WTC11 (cell line): ENCODE measurements at regions of chr9 and their contacts with region 1.

Region 1: DNA sequence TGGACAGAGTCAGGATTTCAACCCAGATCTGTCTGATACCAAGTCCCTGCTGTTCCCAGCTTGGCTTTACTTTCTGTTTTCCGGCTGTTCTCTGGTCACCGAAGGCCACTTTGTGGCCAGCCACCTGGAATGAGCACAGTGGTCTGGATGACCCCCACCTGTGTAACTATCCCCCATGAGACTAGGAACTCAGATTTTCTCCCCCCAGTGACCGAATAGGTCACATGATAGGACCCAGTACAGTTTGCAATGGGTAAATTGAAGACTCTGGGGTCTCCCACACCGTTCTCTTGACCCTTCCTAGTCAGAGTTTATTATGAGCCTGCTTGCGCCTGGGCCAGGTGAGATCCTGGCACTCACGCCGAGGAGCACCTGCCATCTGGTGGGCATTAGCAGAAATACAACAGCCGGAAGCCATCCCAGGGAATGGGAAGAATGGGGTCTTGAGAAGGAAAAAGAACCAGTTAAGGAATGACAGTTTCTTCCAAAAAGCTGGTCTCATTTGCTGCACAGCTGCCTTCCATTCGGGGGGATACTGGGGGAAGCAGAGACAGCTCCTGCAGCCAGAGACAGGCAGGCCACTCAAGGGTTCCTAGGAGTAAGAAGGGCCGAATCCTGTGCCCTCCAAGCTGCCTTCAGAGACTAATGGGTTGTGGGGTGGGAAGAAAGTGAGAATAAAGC is 7.1 kb downstream of the PHYHD1 start:
- DNase-seq: peak; percentile 79
- ATAC-seq: peak; percentile 96
- H3K4me3 Mint-ChIP-seq: no peak overlapping the region
- H3K27ac Mint-ChIP-seq: peak overlapping the region; percentile 86
- H3K4me1 Mint-ChIP-seq: peaks cover 6% of the 10 kb centered on the region; the same call in 1 of the 2 replicates
- H3K27me3 Mint-ChIP-seq: no peaks in the 10 kb centered on the region
- CTCF ChIP-seq: peak; percentile 87

Region 2: DNA sequence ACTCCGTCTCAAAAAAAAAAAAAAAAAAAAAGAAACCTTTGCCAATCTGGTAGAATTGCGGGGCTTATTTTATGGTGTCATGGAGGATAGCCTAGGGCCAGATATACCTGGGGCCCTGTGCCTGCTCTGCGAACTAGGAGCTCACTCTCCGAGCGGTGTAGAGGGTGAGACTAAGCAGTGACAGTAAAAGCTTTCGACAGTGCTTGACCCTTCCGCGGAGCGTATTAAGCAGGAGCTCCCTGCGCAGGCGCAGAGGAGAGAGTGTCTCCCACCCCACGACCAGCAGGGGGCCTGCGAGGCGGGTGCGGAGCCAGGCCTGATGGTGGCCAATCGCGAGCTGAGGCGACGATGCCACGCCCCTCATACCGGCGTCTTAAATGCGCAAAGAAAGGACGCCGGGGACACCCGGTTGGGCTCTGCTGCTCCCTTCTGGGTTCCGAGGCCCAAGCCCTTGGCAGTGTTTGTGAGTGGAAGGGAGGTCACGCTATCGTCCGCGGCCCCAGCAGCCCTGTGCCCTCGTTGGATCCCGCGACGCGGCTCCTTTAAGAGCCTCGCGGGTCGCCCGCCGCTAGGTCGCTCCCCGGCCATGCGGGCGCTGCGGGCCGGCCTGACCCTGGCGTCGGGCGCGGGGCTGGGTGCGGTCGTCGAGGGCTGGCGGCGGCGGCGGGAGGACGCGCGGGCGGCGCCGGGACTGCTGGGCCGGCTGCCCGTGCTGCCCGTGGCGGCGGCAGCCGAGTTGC is 109.6 kb before region 1 on chr9 and contains the start of gene ENDOG:
- CTCF ChIA-PET with region 1: interaction called, 12 read pairs
- POLR2A ChIA-PET with region 1: interaction called, 3 read pairs
- DNase-seq: peak; percentile 99
- ATAC-seq: peak; percentile 86
- H3K4me3 Mint-ChIP-seq: peak within 1 kb of the TSS; percentile 71
- H3K27ac Mint-ChIP-seq: peak within 1 kb of the TSS; percentile 80; the same call in 1 of the 2 replicates
- H3K4me1 Mint-ChIP-seq: peaks cover 3% of the 10 kb centered on the region
- H3K27me3 Mint-ChIP-seq: no peaks in the 10 kb centered on the region
- CTCF ChIP-seq: peak; percentile 53; the same call in 1 of the 2 replicates
- total RNA-seq, gene ENDOG: 25.8 to 28.7 TPM (median 25.8 TPM) in 3 replicates

Region 3: GRCh38 chr9:128846680-128847030 is 81.2 kb before region 1 on chr9:
- CTCF ChIA-PET with region 1: interaction called, 13 read pairs
- POLR2A ChIA-PET with region 1: interaction called, 4 read pairs
- DNase-seq: no peak
- ATAC-seq: no peak
- H3K4me3 Mint-ChIP-seq: no peak overlapping the region
- H3K27ac Mint-ChIP-seq: no peak overlapping the region
- H3K4me1 Mint-ChIP-seq: no peaks in the 10 kb centered on the region
- H3K27me3 Mint-ChIP-seq: no peaks in the 10 kb centered on the region
- CTCF ChIP-seq: no peak

Region 4: GRCh38 chr9:128863647-128864046 is 64.2 kb before region 1 on chr9:
- CTCF ChIA-PET with region 1: interaction called, 54 read pairs
- POLR2A ChIA-PET with region 1: interaction called, 3 read pairs
- DNase-seq: peak; percentile 95
- ATAC-seq: peak; percentile 99
- H3K4me3 Mint-ChIP-seq: no peak overlapping the region
- H3K27ac Mint-ChIP-seq: peak overlapping the region; percentile 53; the same call in 1 of the 2 replicates
- H3K4me1 Mint-ChIP-seq: peaks cover 19% of the 10 kb centered on the region; the same call in 1 of the 2 replicates
- H3K27me3 Mint-ChIP-seq: no peaks in the 10 kb centered on the region
- CTCF ChIP-seq: peak; percentile 100

Region 5: DNA sequence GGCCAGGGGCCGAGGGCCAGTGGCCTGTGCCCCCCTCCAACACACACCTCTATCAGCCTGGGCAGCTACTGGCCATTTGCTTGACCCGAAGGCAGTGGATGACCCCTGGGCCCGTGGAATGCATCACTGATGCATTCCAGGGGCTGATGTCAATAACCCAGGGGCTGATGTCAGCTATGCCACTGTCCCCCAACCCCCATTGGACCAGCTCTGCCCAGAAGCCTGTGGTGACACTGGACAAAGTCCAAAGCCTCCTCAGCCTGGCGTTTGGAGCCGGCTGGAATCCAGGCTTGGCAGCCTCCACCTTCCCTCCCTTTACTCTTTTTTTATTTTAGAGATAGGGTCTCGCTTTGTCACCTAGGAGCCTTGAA is 52.1 kb before region 1 on chr9:
- CTCF ChIA-PET with region 1: interaction called, 20 read pairs
- POLR2A ChIA-PET with region 1: interaction called, 6 read pairs
- DNase-seq: no peak
- ATAC-seq: no peak
- H3K4me3 Mint-ChIP-seq: no peak overlapping the region
- H3K27ac Mint-ChIP-seq: no peak overlapping the region
- H3K4me1 Mint-ChIP-seq: peaks cover 11% of the 10 kb centered on the region
- H3K27me3 Mint-ChIP-seq: no peaks in the 10 kb centered on the region
- CTCF ChIP-seq: no peak

Region 6: GRCh38 chr9:128895556-128895955 is 32.3 kb before region 1 on chr9:
- CTCF ChIA-PET with region 1: interaction called, 13 read pairs
- POLR2A ChIA-PET with region 1: no interaction called
- DNase-seq: peak; percentile 63
- ATAC-seq: peak; percentile 87
- H3K4me3 Mint-ChIP-seq: no peak overlapping the region
- H3K27ac Mint-ChIP-seq: peak overlapping the region; percentile 17; the same call in 1 of the 2 replicates
- H3K4me1 Mint-ChIP-seq: peaks cover 38% of the 10 kb centered on the region
- H3K27me3 Mint-ChIP-seq: no peaks in the 10 kb centered on the region
- CTCF ChIP-seq: no peak